ENCODE measurements at regions of chr18 and their contacts with region 1.

Region 1: DNA sequence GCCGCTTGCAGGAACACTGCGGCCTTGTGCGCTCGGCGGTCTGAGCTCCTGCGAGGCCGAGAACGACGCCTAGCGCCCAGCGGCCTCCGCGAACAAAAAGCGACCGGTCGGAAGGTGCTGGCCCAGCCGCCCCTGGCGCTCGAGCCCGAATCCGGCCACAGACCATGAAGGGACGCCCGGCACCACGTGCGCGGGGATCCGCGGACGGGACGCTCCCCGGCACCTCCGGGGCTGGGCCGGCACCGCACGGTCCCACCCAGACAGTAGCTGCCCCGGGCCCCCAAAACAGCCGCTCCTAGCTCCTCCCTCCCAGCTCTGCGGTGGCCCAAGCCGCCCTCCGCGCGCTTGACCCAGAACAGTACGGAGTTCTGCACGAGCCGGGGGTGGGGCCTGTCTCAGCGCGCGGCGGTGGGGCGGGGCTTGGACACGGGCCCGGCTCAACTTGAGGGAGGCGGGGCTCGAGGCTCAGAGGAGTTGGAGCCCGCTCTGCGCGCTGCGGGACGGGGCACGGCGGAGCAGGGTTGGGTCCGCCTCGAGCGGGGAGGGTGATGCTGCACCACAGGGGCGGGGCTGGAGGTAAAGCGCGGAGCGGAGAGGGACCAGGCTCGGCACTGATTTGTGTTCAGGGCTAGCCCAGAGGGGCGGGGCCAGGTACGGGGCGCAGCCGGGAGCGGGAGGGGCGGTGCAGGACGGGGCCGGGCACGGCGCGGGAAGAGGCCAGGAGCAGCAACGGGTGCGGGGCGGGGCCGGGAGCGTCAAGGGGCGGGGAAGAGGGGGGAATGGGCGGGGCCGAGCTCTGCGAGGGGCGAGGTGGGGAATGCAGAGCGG is 538 bp upstream of the IMPA2 start:
- DNase-seq: peak; percentile 99
- H3K4me3 ChIP-seq: peak overlapping the region; percentile 90
- H3K27ac ChIP-seq: peak overlapping the region; percentile 73
- H3K4me1 ChIP-seq: peaks cover 11% of the 10 kb centered on the region
- H3K27me3 ChIP-seq: no peaks in the 10 kb centered on the region
- CTCF ChIP-seq: no peak

Region 2: DNA sequence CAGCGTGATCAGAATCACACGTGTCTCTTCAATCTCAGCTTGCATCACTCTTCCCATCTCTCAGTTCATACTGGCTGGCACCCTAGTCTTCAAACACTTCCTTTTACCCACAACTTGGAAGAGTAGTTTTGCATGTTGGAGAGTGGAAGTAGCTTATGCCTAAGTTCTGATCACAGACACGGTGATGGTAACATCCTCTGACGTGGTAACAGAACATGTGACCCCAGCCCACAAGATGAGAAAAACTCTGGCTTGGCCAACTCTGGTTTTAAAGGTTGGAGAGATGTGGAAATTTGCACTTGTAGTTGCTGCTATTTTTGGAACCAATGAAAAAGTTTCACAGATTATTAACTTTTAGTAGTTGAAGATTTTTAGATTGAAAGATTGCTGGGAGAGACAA is 526.7 kb before region 1 on chr18:
- CTCF ChIA-PET with region 1: no interaction called
- POLR2A ChIA-PET with region 1: no interaction called
- intact Hi-C with region 1: no loop called
- DNase-seq: no peak
- H3K4me3 ChIP-seq: no peak overlapping the region
- H3K27ac ChIP-seq: no peak overlapping the region
- H3K4me1 ChIP-seq: no peaks in the 10 kb centered on the region
- H3K27me3 ChIP-seq: no peaks in the 10 kb centered on the region
- CTCF ChIP-seq: no peak

Region 3: DNA sequence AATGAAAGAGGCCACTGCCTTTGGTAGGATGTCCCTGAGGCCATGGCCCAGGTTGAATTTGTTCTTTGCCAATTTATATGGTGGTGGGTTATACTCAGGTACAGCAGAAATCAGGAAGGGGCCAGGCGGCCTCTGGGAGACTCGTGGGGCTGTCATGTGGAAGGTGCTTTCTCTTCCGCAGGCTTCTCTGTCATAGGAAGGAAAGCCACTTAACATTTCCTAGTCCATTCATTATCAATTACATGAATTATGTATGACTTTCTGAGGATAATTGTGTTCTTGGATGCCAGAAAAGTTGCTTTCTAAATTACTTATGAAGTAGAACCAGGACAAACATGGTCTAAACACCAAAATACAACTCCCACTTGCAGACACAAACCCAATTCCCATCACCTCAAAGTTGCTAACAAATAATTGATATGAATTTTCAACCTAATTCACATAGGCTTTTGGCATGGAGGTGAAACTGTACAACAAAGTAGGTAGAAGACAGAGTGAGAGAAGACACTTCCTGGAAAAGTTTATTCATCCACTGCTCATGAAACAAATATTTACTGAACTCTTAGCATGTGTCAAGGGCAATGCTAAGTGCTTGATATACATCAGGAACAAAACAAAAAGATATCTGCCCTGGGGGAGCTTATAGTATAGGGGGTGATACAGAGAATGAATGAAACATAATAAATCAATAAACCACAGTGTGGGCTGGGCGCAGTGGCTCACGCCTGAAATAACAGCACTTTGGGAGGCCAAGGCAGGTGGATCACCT is 180.0 kb before region 1 on chr18:
- CTCF ChIA-PET with region 1: no interaction called
- POLR2A ChIA-PET with region 1: no interaction called
- intact Hi-C with region 1: no loop called
- DNase-seq: no peak
- H3K4me3 ChIP-seq: no peak overlapping the region
- H3K27ac ChIP-seq: no peak overlapping the region
- H3K4me1 ChIP-seq: no peaks in the 10 kb centered on the region
- H3K27me3 ChIP-seq: peaks cover 25% of the 10 kb centered on the region
- CTCF ChIP-seq: no peak

Region 4: DNA sequence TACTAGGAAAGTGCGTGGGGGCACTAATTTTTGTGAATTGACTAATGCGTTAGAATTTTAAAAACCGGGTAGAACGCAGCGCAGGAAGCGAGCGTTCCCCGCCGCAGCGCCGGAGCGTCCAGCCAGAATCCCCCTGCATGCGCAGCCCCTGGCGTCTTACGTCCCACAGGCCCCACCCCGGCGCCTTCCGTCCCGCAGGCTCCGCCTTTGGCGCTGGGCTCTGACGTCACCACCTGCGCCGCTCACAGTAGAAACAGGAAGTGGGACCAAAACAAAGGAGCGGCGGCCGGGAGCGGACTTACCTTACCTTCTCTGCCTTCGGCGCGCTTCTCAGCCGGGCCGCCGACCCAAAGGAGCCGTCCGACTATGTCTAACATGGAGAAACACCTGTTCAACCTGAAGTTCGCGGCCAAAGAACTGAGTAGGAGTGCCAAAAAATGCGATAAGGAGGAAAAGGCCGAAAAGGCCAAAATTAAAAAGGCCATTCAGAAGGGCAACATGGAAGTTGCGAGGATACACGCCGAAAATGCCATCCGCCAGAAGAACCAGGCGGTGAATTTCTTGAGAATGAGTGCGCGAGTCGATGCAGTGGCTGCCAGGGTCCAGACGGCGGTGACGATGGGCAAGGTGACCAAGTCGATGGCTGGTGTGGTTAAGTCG is 129.5 kb before region 1 on chr18 and contains the start of gene CHMP1B:
- CTCF ChIA-PET with region 1: no interaction called
- POLR2A ChIA-PET with region 1: no interaction called
- intact Hi-C with region 1: loop called (anchors 10 kb)
- DNase-seq: peak; percentile 98
- H3K4me3 ChIP-seq: peak within 1 kb of the TSS; percentile 82
- H3K27ac ChIP-seq: peak within 1 kb of the TSS; percentile 80
- H3K4me1 ChIP-seq: peaks cover 3% of the 10 kb centered on the region
- H3K27me3 ChIP-seq: peaks cover 4% of the 10 kb centered on the region
- CTCF ChIP-seq: no peak
- total RNA-seq, gene CHMP1B: 17.1 and 19.1 TPM in 2 replicates

Region 5: GRCh38 chr18:11943551-11943950 is 37.2 kb before region 1 on chr18:
- CTCF ChIA-PET with region 1: interaction called, 6 read pairs
- POLR2A ChIA-PET with region 1: no interaction called
- intact Hi-C with region 1: loop called (anchors 5 kb)
- DNase-seq: no peak
- H3K4me3 ChIP-seq: no peak overlapping the region
- H3K27ac ChIP-seq: no peak overlapping the region
- H3K4me1 ChIP-seq: no peaks in the 10 kb centered on the region
- H3K27me3 ChIP-seq: no peaks in the 10 kb centered on the region
- CTCF ChIP-seq: no peak

Region 6: DNA sequence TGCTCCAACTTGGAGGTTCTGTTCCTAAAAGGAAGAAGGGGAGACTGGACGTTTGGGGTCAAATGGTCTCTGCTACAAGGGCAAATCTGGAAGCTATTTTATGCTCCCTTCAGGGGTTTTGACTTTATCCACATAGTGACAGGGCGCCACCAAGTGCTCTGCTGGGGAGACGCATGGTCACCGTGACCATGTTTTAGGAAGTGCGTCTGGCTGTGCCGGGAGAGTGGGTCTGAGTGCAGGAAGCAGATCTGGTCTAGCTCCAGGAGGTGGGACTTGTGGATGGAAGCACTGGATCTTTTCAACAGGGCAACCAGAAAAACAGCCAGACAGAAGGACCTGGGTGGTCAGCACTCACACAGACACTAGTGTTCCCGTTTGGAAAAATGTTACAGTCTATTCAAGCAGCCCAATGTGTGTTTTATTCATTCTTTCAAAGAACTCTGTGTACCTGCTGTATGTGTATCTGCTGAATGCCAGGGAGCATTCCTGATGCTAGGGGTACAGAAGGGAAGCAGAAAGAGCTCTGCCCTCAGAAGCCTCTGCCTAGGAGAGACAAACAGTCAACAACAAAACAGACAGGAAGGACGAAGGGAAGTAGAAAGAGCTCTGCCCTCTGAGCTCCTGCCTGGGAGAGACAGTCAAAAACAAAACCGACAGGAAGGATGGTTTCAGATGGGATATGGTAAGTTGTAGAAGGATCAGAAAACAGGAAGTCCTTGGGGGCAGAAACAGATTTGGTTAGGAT is 14.8 kb after region 1 on chr18:
- CTCF ChIA-PET with region 1: interaction called, 12 read pairs
- POLR2A ChIA-PET with region 1: no interaction called
- intact Hi-C with region 1: no loop called
- DNase-seq: peak; percentile 75
- H3K4me3 ChIP-seq: no peak overlapping the region
- H3K27ac ChIP-seq: no peak overlapping the region
- H3K4me1 ChIP-seq: no peaks in the 10 kb centered on the region
- H3K27me3 ChIP-seq: no peaks in the 10 kb centered on the region
- CTCF ChIP-seq: peak; percentile 92

Region 7: GRCh38 chr18:12271376-12272235 is 290.8 kb after region 1 on chr18:
- CTCF ChIA-PET with region 1: no interaction called
- POLR2A ChIA-PET with region 1: interaction called, 11 read pairs
- intact Hi-C with region 1: no loop called
- DNase-seq: peak; percentile 88
- H3K4me3 ChIP-seq: peak overlapping the region; percentile 56
- H3K27ac ChIP-seq: peak overlapping the region; percentile 38
- H3K4me1 ChIP-seq: no peaks in the 10 kb centered on the region
- H3K27me3 ChIP-seq: no peaks in the 10 kb centered on the region
- CTCF ChIP-seq: peak; percentile 88

Region 8: GRCh38 chr18:12422936-12423335 is 442.2 kb after region 1 on chr18:
- CTCF ChIA-PET with region 1: no interaction called
- POLR2A ChIA-PET with region 1: interaction called, 10 read pairs
- intact Hi-C with region 1: no loop called
- DNase-seq: peak; percentile 42
- H3K4me3 ChIP-seq: no peak overlapping the region
- H3K27ac ChIP-seq: no peak overlapping the region
- H3K4me1 ChIP-seq: peaks cover 4% of the 10 kb centered on the region
- H3K27me3 ChIP-seq: no peaks in the 10 kb centered on the region
- CTCF ChIP-seq: 0 out of 2 replicates have a peak, but pooled peaks have one; percentile 34